ENCODE measurements at regions of chr11 and their contacts with region 1.

Region 1: DNA sequence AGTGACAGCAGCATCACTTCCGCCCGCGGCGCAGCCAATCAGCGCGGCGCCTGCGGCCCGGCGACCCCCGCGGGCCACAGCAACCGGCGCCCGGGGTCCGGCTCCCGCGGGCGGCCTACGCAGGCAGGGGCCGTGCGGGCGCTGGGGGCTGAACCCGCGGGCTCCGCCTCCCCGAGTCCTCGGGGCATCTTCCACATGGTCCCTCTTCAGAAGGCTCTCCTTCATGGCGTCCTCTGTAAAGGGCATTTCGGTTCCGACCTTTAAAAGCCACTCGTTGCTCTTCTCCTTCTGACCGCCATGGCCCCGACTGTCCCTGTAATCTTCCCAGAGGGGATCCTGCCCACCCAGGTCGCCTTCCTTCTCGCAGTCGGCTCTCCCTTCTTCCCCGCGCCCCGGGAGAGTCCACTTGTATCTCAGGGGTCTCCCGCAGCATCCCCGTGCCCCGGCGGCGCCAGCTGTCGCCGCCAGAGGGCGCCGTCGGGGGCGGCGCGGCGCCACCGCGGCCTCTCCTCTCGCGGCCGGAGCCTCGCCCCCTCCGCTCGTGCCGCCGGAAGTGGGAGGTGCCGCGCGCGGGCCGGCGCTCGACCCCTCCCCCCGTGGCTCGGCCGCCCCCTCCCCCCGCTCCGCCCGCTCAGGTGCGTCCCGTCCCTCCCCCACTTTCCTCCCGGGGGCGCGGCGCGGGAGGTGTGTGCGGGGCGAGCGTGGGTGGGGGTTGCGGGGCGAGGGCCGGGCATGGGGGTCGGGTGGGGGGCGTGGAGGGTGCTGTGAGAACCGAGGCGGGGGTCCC is at the start of gene RNF214:
- DNase-seq: peak; percentile 99
- CTCF ChIP-seq: peak; percentile 96

Region 2: GRCh38 chr11:117299351-117300282 is 67.3 kb after region 1 on chr11:
- in situ Hi-C with region 1: loop called (anchors 10 kb)
- DNase-seq: no peak
- CTCF ChIP-seq: no peak